Activated naive CD4-positive, alpha-beta T cell treated with anti-CD3 and anti-CD28 coated beads for 36 hours (primary cell): ENCODE measurements at regions of chr10 and their contacts with region 1.

Region 1: DNA sequence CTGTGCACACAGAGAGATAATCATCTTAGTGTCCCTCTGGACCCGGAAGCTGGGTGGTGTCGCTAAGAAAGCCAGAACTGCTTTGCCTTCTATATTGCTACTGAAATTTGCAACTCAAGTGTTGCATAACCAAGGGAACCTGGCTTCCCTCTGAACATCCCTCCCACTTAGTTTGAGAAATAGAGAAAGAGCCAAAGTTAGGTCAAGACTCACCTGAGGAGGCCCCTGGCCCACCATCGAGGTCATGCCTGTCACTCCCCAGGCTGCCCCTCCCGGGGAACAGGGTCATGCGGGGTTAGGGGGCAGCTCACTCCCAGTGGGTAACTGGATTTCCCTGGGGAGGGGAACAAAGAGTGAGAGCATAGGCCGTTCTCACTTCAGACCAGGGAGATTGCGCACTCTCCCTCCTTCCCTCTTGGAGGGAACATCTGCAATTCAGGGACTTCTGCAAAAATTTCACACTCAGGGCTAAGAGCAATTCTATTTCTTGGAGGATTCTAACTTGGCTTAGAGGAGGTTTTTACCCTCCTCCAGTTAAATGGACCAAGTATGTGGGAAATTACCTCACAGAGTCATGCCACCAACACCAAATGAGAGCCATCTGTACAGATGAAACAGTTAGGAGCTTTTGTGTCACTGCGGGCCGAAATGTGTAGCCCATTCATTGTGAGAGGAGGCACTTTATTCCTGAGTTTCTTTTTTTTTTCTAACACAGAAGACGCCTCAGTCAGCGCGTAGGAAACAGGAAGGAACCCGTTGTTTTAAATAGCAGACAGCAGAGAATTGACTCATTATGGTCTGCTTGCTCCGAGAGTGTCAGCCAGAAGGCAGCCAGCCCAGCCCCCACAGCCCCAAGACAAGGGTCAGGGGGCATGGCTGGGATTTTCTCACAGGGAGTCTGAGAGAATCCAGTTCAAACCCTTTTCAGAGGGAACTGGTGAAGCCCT is 221.3 kb downstream of the ARHGAP12 start:
- DNase-seq: peak; percentile 85
- H3K4me3 Mint-ChIP-seq: peak overlapping the region; percentile 5
- H3K27ac Mint-ChIP-seq: peak overlapping the region; percentile 83
- H3K4me1 Mint-ChIP-seq: peaks cover 22% of the 10 kb centered on the region
- H3K27me3 Mint-ChIP-seq: no peaks in the 10 kb centered on the region

Region 2: GRCh38 chr10:31133628-31134302 is 573.6 kb before region 1 on chr10:
- CTCF ChIA-PET with region 1: no interaction called
- intact Hi-C with region 1: loop called (anchors 10 kb)
- DNase-seq: peak; percentile 76
- H3K4me3 Mint-ChIP-seq: peak overlapping the region; percentile 68
- H3K27ac Mint-ChIP-seq: no peak overlapping the region
- H3K4me1 Mint-ChIP-seq: peaks cover 37% of the 10 kb centered on the region
- H3K27me3 Mint-ChIP-seq: no peaks in the 10 kb centered on the region

Region 3: DNA sequence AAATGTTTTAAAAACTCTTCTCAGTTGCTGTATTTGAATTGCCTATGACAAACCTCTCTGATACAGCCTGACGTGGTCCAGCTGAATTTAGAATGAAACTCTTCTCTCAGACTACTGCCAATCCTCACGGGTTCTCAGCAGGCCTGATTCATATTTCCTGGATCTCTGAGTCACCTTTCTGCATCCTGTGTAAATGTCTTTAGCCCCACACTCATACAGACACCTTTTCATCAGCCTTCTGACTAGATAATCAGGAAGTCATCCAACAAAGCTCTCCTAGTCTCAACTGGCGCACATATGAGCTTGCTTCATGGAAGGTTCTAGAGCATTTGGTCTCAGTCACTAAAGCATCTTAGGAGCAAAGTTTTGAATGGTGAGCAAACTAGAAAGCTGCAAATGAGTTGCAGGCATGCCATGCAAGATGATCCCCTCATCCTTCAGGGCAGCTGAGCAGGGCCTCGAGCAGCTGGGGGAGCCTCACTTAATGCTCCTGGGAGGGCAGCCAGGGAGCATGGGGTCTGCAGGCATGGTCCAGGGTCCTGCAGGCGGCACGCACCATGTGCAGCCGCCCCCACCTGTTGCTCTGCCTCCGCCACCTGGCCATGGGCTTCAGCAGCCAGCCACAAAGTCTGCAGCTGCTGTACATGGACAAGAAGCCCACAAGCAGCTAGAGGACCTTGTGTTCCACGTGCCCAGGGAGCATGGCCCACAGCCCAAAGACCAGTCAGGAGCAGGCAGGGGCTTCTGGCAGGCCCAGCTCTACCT is 38.4 kb after region 1 on chr10:
- CTCF ChIA-PET with region 1: interaction called, 5 read pairs
- intact Hi-C with region 1: loop called (anchors 1 kb)
- DNase-seq: peak; percentile 84
- H3K4me3 Mint-ChIP-seq: no peak overlapping the region
- H3K27ac Mint-ChIP-seq: peak overlapping the region; percentile 95
- H3K4me1 Mint-ChIP-seq: peaks cover 47% of the 10 kb centered on the region
- H3K27me3 Mint-ChIP-seq: no peaks in the 10 kb centered on the region

Region 4: GRCh38 chr10:31759799-31760626 is 52.6 kb after region 1 on chr10:
- CTCF ChIA-PET with region 1: no interaction called
- intact Hi-C with region 1: loop called (anchors 1 kb)
- DNase-seq: peak; percentile 96
- H3K4me3 Mint-ChIP-seq: peak overlapping the region; percentile 94
- H3K27ac Mint-ChIP-seq: peak overlapping the region; percentile 95
- H3K4me1 Mint-ChIP-seq: peaks cover 18% of the 10 kb centered on the region
- H3K27me3 Mint-ChIP-seq: no peaks in the 10 kb centered on the region

Region 5: GRCh38 chr10:31770307-31770902 is 63.0 kb after region 1 on chr10:
- CTCF ChIA-PET with region 1: interaction called, 9 read pairs
- intact Hi-C with region 1: loop called (anchors 1 kb)
- DNase-seq: peak; percentile 76
- H3K4me3 Mint-ChIP-seq: no peak overlapping the region
- H3K27ac Mint-ChIP-seq: no peak overlapping the region
- H3K4me1 Mint-ChIP-seq: peaks cover 5% of the 10 kb centered on the region
- H3K27me3 Mint-ChIP-seq: no peaks in the 10 kb centered on the region

Region 6: DNA sequence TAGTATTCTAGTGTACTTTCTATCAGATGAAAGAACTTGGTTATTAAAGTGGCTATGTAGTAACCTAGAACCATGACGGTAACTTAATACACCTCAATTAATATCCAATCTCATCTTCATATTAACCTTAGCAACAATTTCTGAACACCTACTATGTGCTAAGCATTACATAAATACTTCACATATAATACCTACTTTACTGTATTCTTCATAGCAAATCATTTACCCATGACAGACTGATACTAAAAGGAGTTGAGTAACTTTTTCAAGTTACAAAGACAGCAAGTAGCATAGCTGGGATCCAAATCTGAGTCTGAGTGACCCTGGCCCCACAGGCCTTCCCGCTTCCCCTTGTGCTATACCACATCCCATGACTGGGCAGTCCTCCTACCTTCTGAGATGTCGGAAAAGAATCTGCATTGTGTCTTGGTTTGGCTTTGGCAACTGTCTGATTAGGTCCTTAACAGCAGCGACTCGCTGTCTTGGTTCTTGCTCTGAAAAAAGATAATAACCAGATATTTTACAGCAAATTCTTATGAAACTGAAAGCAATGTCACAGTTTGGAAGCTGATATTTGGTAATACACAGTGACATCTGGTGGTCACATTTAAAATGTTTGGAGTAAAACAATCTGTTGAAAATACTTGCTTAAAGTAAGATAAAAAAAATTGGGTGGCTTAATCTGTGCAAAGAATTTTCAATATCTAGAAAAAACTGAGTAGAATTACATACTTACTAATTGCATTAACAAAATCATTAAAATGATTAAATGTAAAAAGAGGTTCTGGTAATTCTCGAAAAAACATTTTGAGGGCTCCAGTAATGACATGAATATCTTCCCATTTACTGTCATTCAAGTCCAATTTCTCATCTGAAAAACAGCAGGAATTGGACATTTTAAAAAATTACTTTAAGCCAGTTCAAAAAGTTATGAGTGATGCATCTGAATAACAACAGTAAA is 101.2 kb after region 1 on chr10:
- CTCF ChIA-PET with region 1: interaction called, 6 read pairs
- intact Hi-C with region 1: loop called (anchors 1 kb)
- DNase-seq: peak; percentile 24
- H3K4me3 Mint-ChIP-seq: peak overlapping the region; percentile 57
- H3K27ac Mint-ChIP-seq: peak overlapping the region; percentile 77
- H3K4me1 Mint-ChIP-seq: peaks cover 6% of the 10 kb centered on the region
- H3K27me3 Mint-ChIP-seq: no peaks in the 10 kb centered on the region

Region 7: GRCh38 chr10:32155042-32155531 is 447.7 kb after region 1 on chr10:
- CTCF ChIA-PET with region 1: no interaction called
- intact Hi-C with region 1: no loop called
- DNase-seq: no peak
- H3K4me3 Mint-ChIP-seq: no peak overlapping the region
- H3K27ac Mint-ChIP-seq: no peak overlapping the region
- H3K4me1 Mint-ChIP-seq: peaks cover 11% of the 10 kb centered on the region
- H3K27me3 Mint-ChIP-seq: no peaks in the 10 kb centered on the region